CD14-positive monocyte (primary cell): ENCODE measurements at regions of chr10 and their contacts with region 1.

Region 1: DNA sequence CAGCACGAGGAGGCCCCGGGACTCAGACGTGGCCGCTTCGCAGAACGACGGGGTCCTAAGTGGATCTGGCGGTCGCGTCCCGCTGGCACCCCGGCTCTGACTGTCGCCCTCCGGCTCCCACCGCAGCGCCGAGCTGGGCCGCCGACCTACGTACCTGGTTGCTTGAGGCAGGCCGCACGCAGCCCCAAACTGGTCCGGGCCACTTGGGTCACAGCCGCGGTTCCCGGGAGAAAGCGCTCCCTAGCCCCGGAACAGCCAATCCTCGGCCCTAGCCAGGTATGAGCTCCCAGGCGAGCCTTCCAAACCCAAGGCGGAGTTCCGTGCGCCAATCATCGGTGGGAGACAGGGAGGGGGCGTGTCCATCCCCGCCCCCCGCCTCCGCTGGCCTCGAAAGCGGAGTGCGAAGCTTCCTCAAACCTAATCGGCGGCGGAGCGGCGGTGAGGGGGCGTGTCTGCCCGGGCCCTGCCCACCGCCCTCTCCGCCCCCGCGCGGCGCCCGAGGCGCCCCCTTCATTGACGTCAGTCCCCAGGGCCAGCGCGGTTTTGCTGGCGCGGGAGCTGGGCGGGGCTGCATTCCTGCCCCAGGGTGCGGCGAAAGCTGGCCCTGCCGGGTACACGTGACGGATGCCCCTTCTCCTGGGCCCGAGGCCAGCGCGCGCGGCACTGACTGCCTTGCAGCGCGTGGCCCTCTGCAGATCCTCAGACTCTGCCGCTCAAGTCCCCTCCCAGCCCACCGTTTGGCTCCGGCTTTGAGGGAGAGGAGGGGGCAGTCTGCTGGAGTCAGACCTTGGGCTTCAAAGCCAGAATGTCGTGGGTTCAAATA is at the start of gene AVPI1:
- DNase-seq: peak; percentile 93 to 96 (median 95)
- H3K4me3 ChIP-seq: peak within 1 kb of the TSS; percentile 59 to 81 (median 76)
- H3K4me3 Mint-ChIP-seq: peak within 1 kb of the TSS; percentile 88 to 90
- H3K27ac ChIP-seq: peak within 1 kb of the TSS; percentile 24 to 81
- H3K27ac Mint-ChIP-seq: peak within 1 kb of the TSS; percentile 87 to 96 (median 93)
- H3K4me1 ChIP-seq: peaks cover 65 to 82% of the 10 kb centered on the region in 2 donors
- H3K4me1 Mint-ChIP-seq: peaks cover 63% of the 10 kb centered on the region
- H3K27me3 ChIP-seq: no peaks in the 10 kb centered on the region
- H3K27me3 Mint-ChIP-seq: peaks cover 0 to 2% (median 1%) of the 10 kb centered on the region in 3 donors
- CTCF ChIP-seq: no peak
- polyA plus RNA-seq, gene AVPI1: 2.0 to 11.2 (median 2.9) TPM

Region 2: DNA sequence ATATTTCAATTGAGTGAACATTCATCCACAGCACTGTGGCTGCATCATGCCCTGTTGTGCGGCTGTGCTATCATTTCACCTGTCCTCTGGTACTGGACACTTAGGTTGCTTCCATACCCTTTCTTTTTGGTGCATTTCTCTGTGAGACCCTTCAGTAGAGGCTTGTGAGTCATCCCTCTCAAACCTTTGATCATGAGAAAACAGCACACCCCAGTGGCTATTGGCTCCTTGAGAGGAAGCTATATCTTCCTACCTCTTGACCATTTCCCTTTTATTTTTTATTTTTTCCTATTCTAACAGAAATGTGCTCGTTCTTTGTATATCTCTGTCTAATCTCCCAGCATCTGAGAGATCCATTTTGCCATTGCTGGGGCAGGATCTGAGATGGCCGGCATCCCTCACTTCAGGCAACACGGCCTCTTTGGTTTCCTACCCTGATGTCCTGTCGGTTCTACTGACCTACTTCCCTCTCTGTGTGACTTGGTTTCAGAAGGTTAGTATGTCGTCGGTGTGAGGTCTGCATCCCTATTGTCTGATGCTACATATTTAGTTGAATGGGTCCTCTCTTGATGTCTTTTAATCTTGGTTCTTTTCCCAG is 943.1 kb before region 1 on chr10:
- intact Hi-C with region 1: loop called in 1 of 2 experiments (anchors 10 kb)
- DNase-seq: peak; percentile 14 to 50 (median 38)
- H3K4me3 ChIP-seq: peak overlapping the region in 1 of 3 experiments; percentile 30
- H3K4me3 Mint-ChIP-seq: peak overlapping the region in 1 of 2 donors; percentile 87
- H3K27ac ChIP-seq: peak overlapping the region in 1 of 2 donors; percentile 43
- H3K27ac Mint-ChIP-seq: peak overlapping the region; percentile 55 to 92 (median 85)
- H3K4me1 ChIP-seq: peaks cover 63 to 64% of the 10 kb centered on the region in 2 donors
- H3K4me1 Mint-ChIP-seq: peaks cover 51% of the 10 kb centered on the region
- H3K27me3 ChIP-seq: no peaks in the 10 kb centered on the region
- H3K27me3 Mint-ChIP-seq: no peaks in the 10 kb centered on the region
- CTCF ChIP-seq: peak; percentile 2

Region 3: DNA sequence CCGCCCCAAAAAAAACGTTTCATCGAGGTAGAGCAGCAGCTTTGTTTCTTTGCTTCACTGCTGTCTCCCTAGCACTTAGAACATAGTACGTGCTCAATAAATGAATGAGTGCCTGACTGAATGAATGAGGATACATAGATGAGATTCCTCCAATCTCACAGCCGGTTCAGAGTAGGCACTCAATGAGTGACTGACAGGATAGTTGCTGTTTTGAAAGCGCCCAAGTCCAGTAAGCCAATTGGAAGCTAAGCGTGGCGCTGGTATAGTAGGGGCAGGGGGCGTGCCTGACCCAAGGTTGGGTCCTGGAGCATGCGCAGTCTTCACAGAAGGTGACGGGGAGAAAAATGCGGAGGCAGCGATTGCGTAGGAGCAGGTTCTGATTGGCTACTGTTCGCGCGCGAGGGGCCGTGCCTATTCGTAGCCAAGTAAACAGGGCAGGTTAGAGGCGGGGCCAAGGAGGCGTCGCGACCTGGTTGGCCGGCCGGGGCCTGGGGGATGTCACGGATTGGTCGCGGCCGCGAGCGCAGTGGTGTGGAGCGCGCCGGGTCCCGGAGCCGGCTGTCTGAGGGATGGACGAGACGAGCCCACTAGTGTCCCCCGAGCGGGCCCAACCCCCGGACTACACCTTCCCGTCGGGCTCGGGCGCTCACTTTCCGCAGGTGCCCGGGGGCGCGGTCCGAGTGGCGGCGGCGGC is 46.9 kb before region 1 on chr10 and contains the start of gene PI4K2A:
- intact Hi-C with region 1: loop called in 1 of 2 experiments (anchors 5 kb)
- DNase-seq: peak; percentile 99 to 100 (median 100)
- H3K4me3 ChIP-seq: peak within 1 kb of the TSS; percentile 85 to 96 (median 88)
- H3K4me3 Mint-ChIP-seq: peak within 1 kb of the TSS; percentile 96 to 97
- H3K27ac ChIP-seq: peak within 1 kb of the TSS; percentile 79 to 90
- H3K27ac Mint-ChIP-seq: peak within 1 kb of the TSS; percentile 90 to 97 (median 92)
- H3K4me1 ChIP-seq: peaks cover 12 to 17% of the 10 kb centered on the region in 2 donors
- H3K4me1 Mint-ChIP-seq: peaks cover 19% of the 10 kb centered on the region
- H3K27me3 ChIP-seq: no peaks in the 10 kb centered on the region
- H3K27me3 Mint-ChIP-seq: peaks cover 2 to 9% (median 3%) of the 10 kb centered on the region in 3 donors
- CTCF ChIP-seq: no peak
- polyA plus RNA-seq, gene PI4K2A: 5.8 to 16.4 (median 6.7) TPM

Region 4: DNA sequence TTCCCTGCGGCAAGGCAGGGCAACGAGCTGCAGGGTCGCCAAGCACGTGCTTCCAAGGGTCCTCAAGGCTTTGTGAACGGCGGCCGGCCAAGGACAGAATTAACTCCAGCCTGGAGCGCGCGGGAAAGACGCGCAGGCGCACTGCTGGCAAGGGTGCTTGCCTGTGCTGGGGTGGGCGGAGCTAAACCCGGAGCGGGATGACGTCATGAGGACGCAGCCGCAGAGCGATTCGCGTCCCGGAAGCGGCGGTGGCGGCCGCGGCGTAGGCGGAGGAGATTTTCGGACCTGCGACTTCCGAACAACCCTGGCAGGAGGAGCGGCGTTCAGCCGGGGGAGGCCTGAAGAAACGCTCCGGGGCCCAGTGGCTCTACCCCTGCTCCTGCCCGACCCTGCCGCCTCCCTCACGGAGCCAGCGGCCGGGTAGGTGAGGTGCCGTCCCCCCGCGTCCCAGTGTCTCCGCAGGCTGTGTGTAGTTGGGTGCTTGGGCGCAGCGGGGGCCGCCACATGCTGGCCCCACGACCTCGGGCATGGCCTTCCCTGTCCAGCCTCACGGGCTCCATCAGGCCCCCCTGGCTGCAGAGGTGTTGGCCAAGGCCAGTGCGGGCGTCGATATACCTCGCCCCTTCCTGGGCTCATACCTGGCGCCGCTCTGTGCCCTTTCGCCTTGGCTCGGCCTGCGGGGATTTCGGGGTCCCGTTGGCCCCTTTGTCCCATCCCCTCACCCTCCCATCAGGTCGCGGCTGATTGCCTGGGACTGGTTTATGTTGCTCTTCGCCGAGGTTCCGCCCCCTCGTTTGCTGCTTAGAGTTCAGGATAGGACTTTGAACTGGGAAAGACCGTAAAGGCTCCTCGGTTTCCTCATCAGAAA is 50.0 kb after region 1 on chr10 and contains the start of gene ZFYVE27:
- intact Hi-C with region 1: loop called (anchors 5 kb)
- DNase-seq: peak; percentile 92 to 94 (median 93)
- H3K4me3 ChIP-seq: peak within 1 kb of the TSS; percentile 58 to 93 (median 89)
- H3K4me3 Mint-ChIP-seq: peak within 1 kb of the TSS; percentile 85 to 98
- H3K27ac ChIP-seq: peak within 1 kb of the TSS; percentile 79 to 89
- H3K27ac Mint-ChIP-seq: peak within 1 kb of the TSS; percentile 88 to 97 (median 94)
- H3K4me1 ChIP-seq: peaks cover 16 to 21% of the 10 kb centered on the region in 2 donors
- H3K4me1 Mint-ChIP-seq: peaks cover 29% of the 10 kb centered on the region
- H3K27me3 ChIP-seq: no peaks in the 10 kb centered on the region
- H3K27me3 Mint-ChIP-seq: peaks cover 0 to 3% (median 0%) of the 10 kb centered on the region in 3 donors
- CTCF ChIP-seq: no peak
- polyA plus RNA-seq, gene ZFYVE27: 6.2 to 31.1 (median 9.7) TPM

Region 5: DNA sequence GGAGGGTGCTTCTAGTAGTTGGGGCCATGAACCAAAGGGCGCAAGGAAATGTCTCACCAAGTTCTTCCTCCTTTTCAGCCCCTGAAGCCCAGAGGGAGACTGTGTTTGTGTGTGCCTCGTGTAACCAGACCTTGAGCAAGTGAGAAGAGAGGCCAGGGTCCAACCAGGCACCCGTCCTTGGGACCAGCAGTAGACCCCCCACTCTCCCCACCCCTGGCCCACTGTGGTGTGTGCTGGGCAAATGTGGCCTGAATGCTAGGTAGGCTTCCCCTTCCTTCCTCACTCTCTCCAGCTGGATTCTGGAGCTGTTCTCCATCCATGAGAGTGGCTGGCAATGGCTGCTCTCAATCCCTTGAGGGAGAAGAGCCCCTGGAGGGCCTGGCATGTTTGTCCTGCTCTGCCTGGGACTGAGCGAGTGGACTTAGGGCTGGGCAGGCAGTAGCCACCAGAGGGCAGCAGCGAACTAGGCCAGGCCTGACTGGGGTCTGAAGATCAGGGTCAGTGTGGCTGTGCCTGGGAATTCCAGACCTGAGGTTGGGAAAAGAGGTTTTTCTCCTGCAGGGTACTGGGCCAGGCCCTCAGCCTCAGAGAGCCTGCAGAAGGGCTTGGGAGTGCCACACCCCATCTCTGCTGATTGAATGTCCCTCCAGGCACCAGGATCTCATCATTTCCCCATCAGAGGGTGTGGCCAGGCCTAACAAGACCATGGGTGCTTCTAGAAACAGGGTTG is 72.2 kb after region 1 on chr10:
- intact Hi-C with region 1: no loop called
- DNase-seq: peak; percentile 6 to 25 (median 22)
- H3K4me3 ChIP-seq: no peak overlapping the region
- H3K4me3 Mint-ChIP-seq: no peak overlapping the region
- H3K27ac ChIP-seq: peak overlapping the region in 1 of 2 donors; percentile 3
- H3K27ac Mint-ChIP-seq: peak overlapping the region in 3 of 7 donors; percentile 8 to 70 (median 46)
- H3K4me1 ChIP-seq: no peaks in the 10 kb centered on the region
- H3K4me1 Mint-ChIP-seq: no peaks in the 10 kb centered on the region
- H3K27me3 ChIP-seq: no peaks in the 10 kb centered on the region
- H3K27me3 Mint-ChIP-seq: peaks cover 0 to 2% (median 0%) of the 10 kb centered on the region in 3 donors
- CTCF ChIP-seq: peak; percentile 75

Region 6: DNA sequence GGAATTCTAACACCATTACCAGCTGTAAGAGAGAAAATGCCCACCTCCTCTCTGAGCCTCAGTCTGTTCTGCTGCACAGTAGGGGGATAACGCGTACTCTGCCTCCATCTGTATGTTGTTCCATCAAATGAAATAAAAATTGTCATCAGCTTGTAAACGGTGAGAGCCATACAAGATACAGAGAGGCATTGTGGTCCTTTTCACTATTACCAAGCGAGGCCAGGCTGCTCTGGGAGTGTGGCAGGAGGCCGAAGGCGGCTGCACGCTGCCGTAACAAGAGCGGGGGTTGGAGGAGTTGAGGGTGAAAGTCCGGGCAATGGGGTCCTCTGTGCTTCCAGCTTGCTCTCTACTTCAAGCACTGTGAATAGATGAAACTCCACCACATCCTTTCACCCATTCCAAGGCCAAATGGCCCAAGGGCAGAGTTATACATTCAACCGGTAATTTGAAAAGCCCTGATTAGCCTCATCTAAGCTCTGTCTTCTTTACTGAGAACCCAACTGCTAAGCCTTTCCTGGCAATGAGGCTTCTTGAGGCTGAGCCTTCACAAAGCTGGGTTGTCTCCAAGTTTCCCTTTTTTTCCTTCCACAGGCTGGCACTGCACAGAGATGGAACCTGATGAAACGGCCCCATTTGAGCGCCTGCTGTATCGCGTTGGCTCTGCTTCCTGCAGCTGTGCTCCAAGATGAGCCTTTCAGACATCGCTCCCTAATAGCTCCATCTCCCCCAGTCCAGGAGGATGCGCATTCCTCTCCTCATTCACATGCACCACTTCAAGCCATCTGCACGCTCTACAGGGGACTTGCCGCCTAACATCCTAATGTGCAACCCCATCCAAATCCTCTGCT is 680.7 kb after region 1 on chr10:
- intact Hi-C with region 1: no loop called
- DNase-seq: no peak
- H3K4me3 ChIP-seq: no peak overlapping the region
- H3K4me3 Mint-ChIP-seq: no peak overlapping the region
- H3K27ac ChIP-seq: no peak overlapping the region
- H3K27ac Mint-ChIP-seq: no peak overlapping the region
- H3K4me1 ChIP-seq: no peaks in the 10 kb centered on the region
- H3K4me1 Mint-ChIP-seq: peaks cover 8% of the 10 kb centered on the region
- H3K27me3 ChIP-seq: no peaks in the 10 kb centered on the region
- H3K27me3 Mint-ChIP-seq: peaks cover 0 to 6% (median 4%) of the 10 kb centered on the region in 3 donors
- CTCF ChIP-seq: no peak